ENCODE measurements at regions of chr15 and their contacts with region 1.

Region 1: DNA sequence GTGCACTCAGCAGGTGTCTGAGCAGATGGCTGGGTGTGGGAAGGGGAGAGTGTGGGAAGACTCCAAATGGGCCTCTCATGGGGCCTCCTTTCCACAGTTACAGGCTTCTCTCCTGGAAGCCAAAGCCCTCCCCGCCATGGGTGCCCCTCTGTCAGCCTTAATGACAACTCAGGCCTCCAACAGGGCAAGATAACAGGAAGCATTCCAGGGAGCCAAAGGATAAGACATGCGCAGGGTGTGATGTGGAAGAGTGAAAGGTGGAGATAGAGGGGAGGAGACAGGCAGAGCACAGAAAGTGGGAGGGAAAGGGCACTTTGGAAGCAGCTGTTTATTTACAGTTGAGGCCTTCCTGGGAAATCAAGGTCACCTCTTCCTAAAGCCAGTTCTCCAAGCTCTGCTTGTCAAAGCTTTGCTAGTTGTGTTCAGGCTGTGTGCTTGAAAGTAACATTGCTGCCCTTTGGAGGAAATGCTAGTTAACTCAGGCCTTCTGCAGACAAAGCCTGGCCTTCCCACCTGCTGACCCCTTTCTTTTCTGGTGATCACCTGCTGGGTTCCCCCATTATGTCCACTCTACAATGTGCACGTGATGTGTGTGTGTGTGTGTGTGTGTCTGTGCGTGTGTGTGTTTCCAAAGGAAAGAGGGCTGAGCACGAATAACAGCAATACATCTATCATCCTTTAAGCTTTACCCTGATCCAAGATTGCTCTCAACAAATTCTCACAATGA is 35.2 kb upstream of the SMAD3 start:
- DNase-seq: peak; percentile 72
- ATAC-seq: peak; percentile 76
- H3K4me3 Mint-ChIP-seq: peak overlapping the region; percentile 3; the same call in 1 of the 2 replicates
- H3K27ac Mint-ChIP-seq: no peak overlapping the region; the same call in 1 of the 2 replicates
- H3K4me1 Mint-ChIP-seq: peaks cover 44% of the 10 kb centered on the region
- H3K27me3 Mint-ChIP-seq: peaks cover 14% of the 10 kb centered on the region
- CTCF ChIP-seq: no peak

Region 2: GRCh38 chr15:67064607-67065443 is 34.6 kb after region 1 on chr15:
- CTCF ChIA-PET with region 1: interaction called, 6 read pairs
- POLR2A ChIA-PET with region 1: interaction called, 12 read pairs
- DNase-seq: peak; percentile 76
- ATAC-seq: peak; percentile 10
- H3K4me3 Mint-ChIP-seq: peak overlapping the region; percentile 70
- H3K27ac Mint-ChIP-seq: peak overlapping the region; percentile 95
- H3K4me1 Mint-ChIP-seq: peaks cover 45% of the 10 kb centered on the region
- H3K27me3 Mint-ChIP-seq: peaks cover 31% of the 10 kb centered on the region
- CTCF ChIP-seq: no peak

Region 3: DNA sequence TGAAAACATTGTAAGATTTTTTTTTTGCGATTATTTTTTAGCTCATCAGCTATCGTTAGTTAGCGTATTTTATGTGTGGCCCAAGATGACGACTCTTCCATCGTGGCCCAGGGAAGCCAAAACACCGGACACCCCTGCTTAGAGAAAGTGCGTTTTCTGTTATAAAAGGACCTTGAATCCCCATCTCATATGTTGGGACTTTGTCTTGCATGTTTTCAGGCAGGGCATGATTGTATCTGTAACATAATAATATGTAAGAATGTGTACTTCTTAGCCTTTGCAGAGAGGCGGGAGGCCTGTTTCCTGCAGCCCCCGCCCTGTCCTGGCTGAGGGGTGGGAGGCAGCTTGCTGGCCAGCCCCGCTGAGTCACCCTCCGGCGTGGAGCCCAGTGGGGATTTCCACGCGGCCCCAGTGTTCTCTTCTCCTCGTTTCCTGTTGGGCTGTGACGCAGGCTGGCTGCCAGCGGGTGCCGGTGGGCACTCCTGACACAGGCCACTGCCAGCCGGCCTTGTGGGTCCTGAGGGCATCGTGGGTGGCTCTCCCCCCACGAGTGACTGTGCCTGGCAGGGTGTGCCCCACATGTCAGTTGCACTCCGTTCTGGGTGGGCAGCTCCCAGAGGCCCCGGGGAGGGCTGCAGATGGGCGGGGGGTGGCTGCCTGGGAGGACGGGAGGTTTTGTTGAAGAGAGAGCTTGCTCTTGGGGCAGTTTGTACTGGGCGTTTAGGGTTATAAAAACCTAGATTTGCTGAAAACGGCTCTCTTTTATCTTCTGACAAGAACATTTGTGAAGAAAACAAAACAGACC is 90.8 kb after region 1 on chr15:
- CTCF ChIA-PET with region 1: no interaction called
- POLR2A ChIA-PET with region 1: no interaction called
- DNase-seq: peak; percentile 31
- ATAC-seq: peak; percentile 40; the same call in 1 of the 2 replicates
- H3K4me3 Mint-ChIP-seq: no peak overlapping the region
- H3K27ac Mint-ChIP-seq: 0 out of 2 replicates have a peak overlapping the region, but pooled peaks have one; percentile 64
- H3K4me1 Mint-ChIP-seq: peaks cover 42% of the 10 kb centered on the region
- H3K27me3 Mint-ChIP-seq: no peaks in the 10 kb centered on the region
- CTCF ChIP-seq: no peak

Measured in WTC11 (cell line).